Activated CD8-positive, alpha-beta memory T cell treated with anti-CD3 and anti-CD28 coated beads, Interleukin-2, amount 10 ng/mL, durations not matched to agents 7 days and 5 days (primary cell): ENCODE measurements at regions of chr17 and their contacts with region 1.

Region 1: GRCh38 chr17:75205037-75205792 is at the start of gene NUP85:
- DNase-seq: peak; percentile 93
- ATAC-seq: peak; percentile 90
- H3K4me3 Mint-ChIP-seq: peak within 1 kb of the TSS; percentile 95
- H3K27ac Mint-ChIP-seq: peak within 1 kb of the TSS; percentile 96
- H3K4me1 Mint-ChIP-seq: peaks cover 28% of the 10 kb centered on the region
- H3K27me3 Mint-ChIP-seq: no peaks in the 10 kb centered on the region
- total RNA-seq, gene NUP85: 164 to 176 TPM

Region 2: DNA sequence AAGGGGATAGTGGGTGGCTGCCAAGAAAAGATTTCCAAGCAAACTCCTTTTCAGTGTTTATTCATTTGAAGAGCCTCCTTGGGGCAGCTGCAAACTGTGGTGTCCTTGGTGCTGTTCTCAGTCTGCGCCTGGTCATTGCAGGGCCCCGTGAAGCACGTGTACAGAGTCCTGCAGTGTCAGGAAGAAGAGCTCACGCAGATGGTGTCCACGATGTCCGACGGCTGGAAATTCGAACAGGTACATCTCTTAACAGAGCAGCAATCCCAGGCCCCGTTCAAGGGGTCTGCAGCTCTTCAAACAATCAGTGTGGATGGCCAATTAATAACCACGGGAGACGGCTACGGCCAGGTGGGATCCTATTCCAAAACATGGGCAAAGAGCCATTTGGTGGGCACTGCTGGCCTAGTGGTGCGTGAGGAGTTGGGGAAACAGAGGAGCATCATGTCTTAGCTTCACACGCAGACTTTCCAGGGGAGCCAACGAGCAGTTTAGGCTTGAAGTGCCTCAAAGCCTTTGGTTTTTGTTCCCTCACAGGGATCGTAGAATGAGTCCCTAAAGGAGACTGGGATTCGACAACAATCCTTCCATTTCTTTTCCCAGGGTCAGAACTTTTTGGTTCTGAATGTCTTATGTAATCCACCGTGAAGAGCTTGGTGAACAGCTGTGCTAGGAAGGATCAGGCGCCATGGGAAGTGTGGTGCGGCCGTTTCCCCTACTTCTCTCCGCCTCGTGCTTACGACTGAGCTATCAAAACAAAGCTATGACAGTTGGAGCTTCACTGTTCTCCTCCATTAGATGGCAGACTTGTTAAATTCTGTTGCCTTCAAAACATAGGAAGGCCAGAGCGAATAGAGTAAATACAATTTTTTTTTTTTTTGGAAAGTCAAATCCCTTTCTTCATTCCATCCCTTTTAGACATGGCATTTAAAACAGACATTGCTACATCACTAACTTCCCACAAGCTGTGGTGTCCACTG is 145.6 kb before region 1 on chr17:
- CTCF ChIA-PET with region 1: interaction called, 12 read pairs
- DNase-seq: no peak
- ATAC-seq: no peak
- H3K4me3 Mint-ChIP-seq: no peak overlapping the region
- H3K27ac Mint-ChIP-seq: no peak overlapping the region
- H3K4me1 Mint-ChIP-seq: peaks cover 5% of the 10 kb centered on the region
- H3K27me3 Mint-ChIP-seq: no peaks in the 10 kb centered on the region

Region 3: DNA sequence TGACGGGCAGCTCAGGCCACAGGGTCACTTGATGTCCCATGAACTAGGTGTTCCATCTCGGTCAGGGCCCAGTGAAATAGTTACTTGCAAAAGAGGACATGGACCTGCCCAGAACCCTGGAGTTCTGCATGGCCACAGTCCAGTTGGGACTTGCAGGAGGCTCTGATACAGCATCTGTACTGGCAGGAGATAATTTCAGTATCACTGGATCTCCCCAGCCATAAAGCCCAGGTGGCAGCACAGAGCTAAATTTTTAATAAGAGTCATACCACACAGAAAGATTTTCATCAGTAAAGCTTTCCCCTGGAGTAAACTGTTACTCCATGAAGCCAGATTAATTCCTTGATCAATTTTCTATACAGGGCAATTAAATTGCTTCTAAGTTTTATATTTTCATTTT is 135.4 kb before region 1 on chr17:
- CTCF ChIA-PET with region 1: interaction called, 11 read pairs
- DNase-seq: no peak
- ATAC-seq: no peak
- H3K4me3 Mint-ChIP-seq: no peak overlapping the region
- H3K27ac Mint-ChIP-seq: no peak overlapping the region
- H3K4me1 Mint-ChIP-seq: peaks cover 25% of the 10 kb centered on the region
- H3K27me3 Mint-ChIP-seq: no peaks in the 10 kb centered on the region

Region 4: GRCh38 chr17:75131280-75132017 is 73.8 kb before region 1 on chr17 and contains the start of gene NT5C:
- CTCF ChIA-PET with region 1: interaction called, 14 read pairs
- DNase-seq: peak; percentile 86
- ATAC-seq: peak; percentile 87
- H3K4me3 Mint-ChIP-seq: peak within 1 kb of the TSS; percentile 81
- H3K27ac Mint-ChIP-seq: peak within 1 kb of the TSS; percentile 89
- H3K4me1 Mint-ChIP-seq: peaks cover 28% of the 10 kb centered on the region
- H3K27me3 Mint-ChIP-seq: no peaks in the 10 kb centered on the region
- total RNA-seq, gene NT5C: 65.2 to 73.1 TPM

Region 5: DNA sequence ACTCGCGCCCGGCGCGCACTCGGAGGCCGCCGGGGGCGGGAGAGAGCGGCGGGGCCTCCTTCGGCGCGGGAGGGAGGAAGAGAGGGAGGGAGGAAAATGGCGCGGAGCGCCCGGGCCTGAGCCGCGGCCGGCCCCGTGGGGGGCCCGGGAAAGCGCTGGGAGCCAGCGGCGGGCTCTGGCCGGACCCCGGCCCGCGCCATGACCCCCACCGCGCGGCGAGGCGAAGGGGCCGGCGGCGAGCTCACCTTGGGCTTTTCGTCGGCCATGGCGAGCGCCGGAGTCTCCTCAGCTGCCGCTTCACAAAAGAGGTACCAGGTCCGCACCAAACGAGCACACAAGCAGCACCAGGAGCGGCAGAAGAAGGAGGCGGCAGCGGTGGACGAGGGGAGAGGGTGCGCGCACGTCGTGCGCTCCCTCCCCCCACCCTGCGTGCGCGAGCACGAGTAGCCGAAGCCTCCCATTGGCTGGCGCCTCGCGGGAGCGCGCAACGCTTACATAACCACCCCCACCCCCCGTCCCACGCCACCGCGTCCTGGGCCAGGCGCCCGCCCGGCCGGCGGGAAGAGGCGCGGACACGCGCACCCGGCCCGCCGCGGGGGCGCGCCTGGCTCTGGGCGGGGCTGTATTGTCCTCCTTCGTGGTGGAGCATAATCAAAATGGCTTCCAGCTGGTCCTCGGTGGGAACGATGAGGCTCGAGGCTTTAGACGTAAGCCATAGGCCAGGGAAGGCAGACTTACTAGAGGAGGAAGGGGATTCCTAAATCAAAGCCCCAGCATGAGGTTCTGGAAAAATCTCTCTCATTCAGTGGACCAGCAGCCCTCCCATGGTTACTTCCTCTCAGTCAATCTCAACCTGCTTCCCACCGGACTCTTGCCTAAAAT is 22.4 kb before region 1 on chr17 and contains the start of gene SUMO2:
- CTCF ChIA-PET with region 1: interaction called, 59 read pairs
- DNase-seq: peak; percentile 96
- ATAC-seq: peak; percentile 83
- H3K4me3 Mint-ChIP-seq: peak within 1 kb of the TSS; percentile 91
- H3K27ac Mint-ChIP-seq: peak within 1 kb of the TSS; percentile 99
- H3K4me1 Mint-ChIP-seq: peaks cover 48% of the 10 kb centered on the region
- H3K27me3 Mint-ChIP-seq: no peaks in the 10 kb centered on the region
- total RNA-seq, gene SUMO2: 469 to 639 TPM

Region 6: DNA sequence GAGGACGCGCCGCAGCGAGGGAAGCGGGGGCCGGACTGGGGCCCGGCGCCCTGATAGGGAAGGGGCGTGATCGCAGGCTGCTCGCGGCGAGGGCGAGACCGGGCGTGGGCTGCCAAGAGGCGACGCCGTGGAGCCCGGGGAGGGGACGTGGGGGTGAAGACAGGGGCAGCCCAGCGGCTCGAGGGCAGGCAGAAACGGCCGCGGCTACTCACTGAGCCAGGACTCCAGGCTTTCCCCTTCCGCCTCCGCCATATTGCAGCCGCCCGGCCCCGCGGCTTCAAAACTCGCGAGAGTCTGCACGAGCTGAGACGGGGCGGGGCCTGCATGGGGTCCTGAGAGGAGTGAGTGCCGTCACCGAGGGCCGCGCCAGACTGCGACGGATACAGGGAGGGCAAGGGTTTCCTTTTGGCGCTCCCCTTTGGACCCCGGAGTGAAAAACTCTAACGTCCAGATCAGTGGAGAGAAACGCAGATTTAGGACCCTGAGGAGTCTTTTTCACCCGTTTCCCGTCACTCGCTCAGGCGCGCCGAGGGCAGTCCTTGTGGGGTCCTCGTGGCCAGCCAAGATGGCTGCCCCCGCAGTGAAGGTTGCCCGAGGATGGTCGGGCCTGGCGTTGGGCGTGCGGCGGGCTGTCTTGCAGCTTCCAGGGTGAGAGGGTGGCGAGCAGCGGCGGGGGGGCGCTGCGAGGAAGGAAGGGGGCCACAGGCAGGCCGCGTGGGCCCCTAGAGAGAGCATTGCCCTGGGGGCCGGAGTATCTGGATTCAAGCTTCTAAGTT is 56.3 kb after region 1 on chr17 and contains the starts of genes GGA3 and MRPS7:
- CTCF ChIA-PET with region 1: interaction called, 12 read pairs
- DNase-seq: peak; percentile 97
- ATAC-seq: peak; percentile 96
- H3K4me3 Mint-ChIP-seq: peak within 1 kb of the TSS; percentile 94
- H3K27ac Mint-ChIP-seq: peak within 1 kb of the TSS; percentile 99
- H3K4me1 Mint-ChIP-seq: peaks cover 44% of the 10 kb centered on the region
- H3K27me3 Mint-ChIP-seq: no peaks in the 10 kb centered on the region
- total RNA-seq, gene GGA3: 84.6 to 90.2 TPM
- total RNA-seq, gene MRPS7: 49.5 to 56.9 TPM

Region 7: GRCh38 chr17:75313941-75314551 is 108.8 kb after region 1 on chr17:
- CTCF ChIA-PET with region 1: no interaction called
- DNase-seq: no peak
- ATAC-seq: no peak
- H3K4me3 Mint-ChIP-seq: no peak overlapping the region
- H3K27ac Mint-ChIP-seq: no peak overlapping the region
- H3K4me1 Mint-ChIP-seq: peaks cover 33% of the 10 kb centered on the region
- H3K27me3 Mint-ChIP-seq: no peaks in the 10 kb centered on the region